A549 (cell line): ENCODE measurements at regions of chr1 and their contacts with region 1.

Region 1: GRCh38 chr1:226626577-226626956 is 78.0 kb downstream of the STUM start:
- DNase-seq: peak; percentile 63 to 67
- ATAC-seq: peak; percentile 85 to 93
- H3K4me3 ChIP-seq: no peak overlapping the region
- H3K27ac ChIP-seq: no peak overlapping the region
- H3K4me1 ChIP-seq: no peaks in the 10 kb centered on the region
- CTCF ChIP-seq: peak; percentile 83
- EP300 ChIP-seq: no peak
- POLR2A ChIP-seq: no peak
- RAD21 ChIP-seq: peak; percentile 62 to 67

Region 2: DNA sequence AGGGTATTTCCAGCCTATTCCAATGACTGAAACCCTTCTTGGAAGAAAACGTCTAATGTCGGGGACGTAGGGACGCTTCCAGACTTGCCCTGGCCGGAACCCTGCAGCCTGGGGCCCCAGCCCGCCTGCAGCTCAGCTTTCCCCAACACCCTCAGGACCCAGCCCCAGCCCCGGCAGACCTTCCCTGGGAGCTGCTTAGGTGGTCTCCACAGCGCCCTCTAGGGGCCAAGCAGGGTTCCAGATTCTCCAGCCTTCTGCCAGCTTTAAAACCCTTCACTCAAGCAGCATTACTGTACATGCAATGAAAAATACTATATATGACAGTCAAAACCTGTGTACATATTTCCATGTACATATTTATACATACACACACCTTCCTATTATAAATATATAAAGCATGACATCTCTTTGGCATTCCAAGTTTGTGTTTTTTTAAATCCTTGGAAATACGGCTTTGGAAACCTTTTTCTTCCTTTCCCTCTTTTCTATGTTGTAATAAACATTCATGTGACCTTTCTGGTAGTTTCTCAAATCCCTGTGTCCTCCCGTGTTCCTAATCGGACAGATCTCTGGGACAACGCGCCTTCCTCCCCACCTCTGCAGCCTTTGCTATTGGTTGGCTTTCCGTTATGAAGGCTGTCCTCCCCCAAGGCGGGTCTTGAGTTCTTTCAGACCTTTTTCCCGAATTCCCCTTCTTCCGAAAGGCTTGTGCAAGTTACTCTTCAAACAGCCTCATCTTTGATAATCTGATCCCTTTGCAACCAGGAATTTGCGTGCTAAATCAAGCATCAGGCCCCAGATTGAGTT is 17.7 kb before region 1 on chr1:
- CTCF ChIA-PET with region 1: interaction called, 23 read pairs
- POLR2A ChIA-PET with region 1: no interaction called
- DNase-seq: peak; percentile 63 to 72
- ATAC-seq: peak; percentile 40 to 92; a peak in 4 of 6 replicates
- H3K4me3 ChIP-seq: no peak overlapping the region
- H3K27ac ChIP-seq: no peak overlapping the region
- H3K4me1 ChIP-seq: no peaks in the 10 kb centered on the region
- CTCF ChIP-seq: peak; percentile 73
- EP300 ChIP-seq: no peak
- POLR2A ChIP-seq: no peak
- RAD21 ChIP-seq: peak; percentile 38 to 52; a peak in 4 of 5 replicates

Region 3: DNA sequence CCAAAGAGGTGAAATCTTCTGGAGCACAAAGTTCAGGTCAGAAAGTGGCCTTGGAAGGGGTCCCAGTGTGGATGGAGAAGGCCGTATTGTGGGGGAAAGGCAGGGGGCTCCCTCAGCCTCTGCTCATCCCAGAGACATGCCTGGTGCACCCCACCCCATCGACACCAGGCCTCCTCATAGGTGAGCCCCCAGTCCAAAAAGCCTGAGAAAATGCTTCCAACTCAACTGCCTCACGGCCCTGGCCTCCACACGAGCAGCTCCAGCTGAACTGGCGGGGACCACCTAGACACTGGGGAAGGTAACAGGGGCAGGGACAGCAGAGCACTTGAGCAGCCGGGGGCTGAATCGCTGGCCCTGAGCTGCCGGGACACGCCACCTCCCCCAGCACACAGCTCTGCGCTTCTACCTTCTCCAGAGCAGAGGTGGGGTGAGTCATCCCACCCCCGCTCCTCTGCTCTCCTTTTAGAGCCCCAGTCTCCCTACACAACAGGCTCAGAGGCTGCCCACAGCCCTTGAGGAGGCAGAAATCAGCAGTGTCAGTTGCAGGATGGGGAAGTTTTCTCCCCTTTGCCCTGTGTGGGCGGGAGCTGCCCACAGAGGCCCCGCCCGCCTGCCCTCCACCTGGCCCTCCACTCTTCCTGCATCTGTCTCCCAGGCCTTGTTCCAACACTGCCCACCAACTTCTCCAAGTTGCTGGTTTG is 16.5 kb after region 1 on chr1:
- CTCF ChIA-PET with region 1: interaction called, 12 read pairs
- POLR2A ChIA-PET with region 1: no interaction called
- DNase-seq: no peak
- ATAC-seq: peak in 1 of 2 experiments; percentile 52; a peak in 3 of 6 replicates
- H3K4me3 ChIP-seq: no peak overlapping the region
- H3K27ac ChIP-seq: no peak overlapping the region
- H3K4me1 ChIP-seq: no peaks in the 10 kb centered on the region
- CTCF ChIP-seq: no peak
- EP300 ChIP-seq: no peak
- POLR2A ChIP-seq: no peak
- RAD21 ChIP-seq: no peak

Region 4: GRCh38 chr1:226846801-226847200 is 220.2 kb after region 1 on chr1:
- CTCF ChIA-PET with region 1: interaction called, 12 read pairs
- POLR2A ChIA-PET with region 1: no interaction called
- DNase-seq: no peak
- ATAC-seq: no peak
- H3K4me3 ChIP-seq: no peak overlapping the region
- H3K27ac ChIP-seq: no peak overlapping the region
- H3K4me1 ChIP-seq: no peaks in the 10 kb centered on the region
- CTCF ChIP-seq: no peak
- EP300 ChIP-seq: no peak
- POLR2A ChIP-seq: no peak
- RAD21 ChIP-seq: no peak

Region 5: GRCh38 chr1:226891846-226892523 is 265.4 kb after region 1 on chr1:
- CTCF ChIA-PET with region 1: no interaction called
- POLR2A ChIA-PET with region 1: no interaction called
- DNase-seq: no peak
- ATAC-seq: no peak; a peak in 1 of 6 replicates
- H3K4me3 ChIP-seq: no peak overlapping the region
- H3K27ac ChIP-seq: no peak overlapping the region
- H3K4me1 ChIP-seq: no peaks in the 10 kb centered on the region
- CTCF ChIP-seq: no peak
- EP300 ChIP-seq: no peak
- POLR2A ChIP-seq: no peak
- RAD21 ChIP-seq: no peak